Ovary (tissue), 10 donors: ENCODE measurements at regions of chr10 and their contacts with region 1.

Region 1: DNA sequence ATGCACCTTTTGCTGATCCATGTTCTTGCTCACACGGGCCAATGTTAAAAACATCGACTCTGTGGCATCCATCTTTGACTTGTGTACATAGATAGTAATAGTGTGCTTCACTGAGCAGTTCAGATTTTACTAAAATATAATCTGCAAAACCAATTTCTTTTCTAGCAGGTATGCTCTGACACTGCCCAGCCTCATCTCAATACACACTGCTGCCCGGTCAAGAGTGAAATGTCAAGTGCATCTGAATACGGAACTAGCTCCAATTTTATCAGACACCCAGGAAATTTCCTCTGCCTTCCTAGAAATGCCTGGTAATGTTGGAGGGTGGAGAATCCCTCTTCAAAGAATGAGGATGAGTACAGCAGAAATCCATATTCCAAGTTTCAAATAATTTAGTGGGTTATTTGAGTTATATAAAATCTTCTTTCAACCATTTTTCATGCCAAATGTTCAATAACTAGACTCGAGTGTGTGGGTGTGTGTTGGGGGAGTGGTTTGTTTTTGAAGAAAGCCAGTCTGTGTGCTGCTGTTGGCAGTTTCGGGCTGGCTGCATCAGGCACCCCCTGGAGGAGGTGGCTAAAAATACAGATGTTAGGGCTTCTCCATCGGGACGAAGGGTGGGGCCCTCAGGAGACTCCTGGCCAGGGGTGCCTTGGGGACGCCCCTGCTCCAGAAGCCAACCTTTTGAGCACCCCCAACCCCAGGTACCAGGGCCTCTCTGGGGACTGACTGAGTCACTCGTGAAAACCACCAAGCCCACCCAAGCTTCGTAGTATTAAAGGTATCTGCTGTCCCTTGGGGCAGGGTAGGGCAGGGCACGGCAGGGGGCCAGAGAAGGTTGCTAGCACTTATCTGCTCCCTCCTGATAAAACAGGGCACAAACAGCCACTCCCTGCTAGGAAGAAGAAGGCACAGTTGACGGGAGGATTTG is 15.4 kb downstream of the CTBP2 start:
- DNase-seq: peak in 1 of 5 donors; percentile 54
- H3K4me3 ChIP-seq: no peak overlapping the region
- H3K27ac ChIP-seq: no peak overlapping the region
- H3K4me1 ChIP-seq: peaks cover 49% of the 10 kb centered on the region
- H3K27me3 ChIP-seq: no peaks in the 10 kb centered on the region
- CTCF ChIP-seq: peak in 1 of 3 donors; percentile 39
- EP300 ChIP-seq: no peak
- POLR2A ChIP-seq: no peak

Region 2: GRCh38 chr10:124741281-124741921 is 403.6 kb before region 1 on chr10:
- intact Hi-C with region 1: no loop called
- DNase-seq: peak; percentile 85 to 92 (median 88)
- H3K4me3 ChIP-seq: no peak overlapping the region
- H3K27ac ChIP-seq: peak overlapping the region in 1 of 2 donors; percentile 78
- H3K4me1 ChIP-seq: peaks cover 37% of the 10 kb centered on the region
- H3K27me3 ChIP-seq: no peaks in the 10 kb centered on the region
- CTCF ChIP-seq: peak; percentile 94 to 95 (median 95)
- EP300 ChIP-seq: no peak
- POLR2A ChIP-seq: no peak

Region 3: GRCh38 chr10:125000366-125001312 is 144.3 kb before region 1 on chr10:
- intact Hi-C with region 1: loop called in 1 of 4 experiments (anchors 10 kb)
- DNase-seq: peak in 4 of 5 donors; percentile 28 to 50 (median 46)
- H3K4me3 ChIP-seq: no peak overlapping the region
- H3K27ac ChIP-seq: peak overlapping the region; percentile 26 to 72
- H3K4me1 ChIP-seq: peaks cover 43% of the 10 kb centered on the region
- H3K27me3 ChIP-seq: no peaks in the 10 kb centered on the region
- CTCF ChIP-seq: peak in 1 of 3 donors; percentile 16
- EP300 ChIP-seq: no peak
- POLR2A ChIP-seq: no peak

Region 4: GRCh38 chr10:125102231-125102630 is 42.7 kb before region 1 on chr10:
- intact Hi-C with region 1: no loop called
- DNase-seq: peak in 3 of 5 donors; percentile 7 to 13 (median 10)
- H3K4me3 ChIP-seq: no peak overlapping the region
- H3K27ac ChIP-seq: no peak overlapping the region
- H3K4me1 ChIP-seq: peaks cover 11% of the 10 kb centered on the region
- H3K27me3 ChIP-seq: no peaks in the 10 kb centered on the region
- CTCF ChIP-seq: no peak
- EP300 ChIP-seq: no peak
- POLR2A ChIP-seq: no peak

Region 5: DNA sequence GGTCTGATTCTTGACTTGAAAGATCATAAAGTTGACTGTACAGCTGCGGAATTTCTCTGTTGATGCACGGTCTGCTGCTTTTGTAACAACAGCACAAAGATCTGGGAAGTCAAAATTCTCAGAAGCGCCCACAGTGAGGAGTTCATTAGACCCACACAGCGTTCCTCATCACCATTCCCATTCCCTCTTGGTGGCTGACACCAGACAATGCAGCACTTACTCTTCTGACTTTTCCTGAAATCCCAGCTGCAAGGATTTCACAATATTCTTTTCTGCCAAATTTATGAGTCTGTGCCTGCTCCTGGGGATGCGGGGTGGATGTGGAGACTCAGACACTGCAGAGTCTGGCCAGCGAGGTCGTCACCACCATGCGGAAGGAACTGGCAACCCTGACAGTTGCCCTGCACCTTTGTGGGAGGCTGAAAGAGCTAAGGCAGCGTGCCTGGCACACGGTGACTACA is 985.3 kb after region 1 on chr10:
- intact Hi-C with region 1: no loop called
- DNase-seq: peak in 4 of 5 donors; percentile 45 to 60 (median 57)
- H3K4me3 ChIP-seq: no peak overlapping the region
- H3K27ac ChIP-seq: peak overlapping the region in 1 of 2 donors; percentile 48
- H3K4me1 ChIP-seq: peaks cover 11% of the 10 kb centered on the region
- H3K27me3 ChIP-seq: no peaks in the 10 kb centered on the region
- CTCF ChIP-seq: no peak
- EP300 ChIP-seq: no peak
- POLR2A ChIP-seq: no peak